Posterior vena cava (tissue), 2 donors: ENCODE measurements at regions of chr12 and their contacts with region 1.

Region 1: DNA sequence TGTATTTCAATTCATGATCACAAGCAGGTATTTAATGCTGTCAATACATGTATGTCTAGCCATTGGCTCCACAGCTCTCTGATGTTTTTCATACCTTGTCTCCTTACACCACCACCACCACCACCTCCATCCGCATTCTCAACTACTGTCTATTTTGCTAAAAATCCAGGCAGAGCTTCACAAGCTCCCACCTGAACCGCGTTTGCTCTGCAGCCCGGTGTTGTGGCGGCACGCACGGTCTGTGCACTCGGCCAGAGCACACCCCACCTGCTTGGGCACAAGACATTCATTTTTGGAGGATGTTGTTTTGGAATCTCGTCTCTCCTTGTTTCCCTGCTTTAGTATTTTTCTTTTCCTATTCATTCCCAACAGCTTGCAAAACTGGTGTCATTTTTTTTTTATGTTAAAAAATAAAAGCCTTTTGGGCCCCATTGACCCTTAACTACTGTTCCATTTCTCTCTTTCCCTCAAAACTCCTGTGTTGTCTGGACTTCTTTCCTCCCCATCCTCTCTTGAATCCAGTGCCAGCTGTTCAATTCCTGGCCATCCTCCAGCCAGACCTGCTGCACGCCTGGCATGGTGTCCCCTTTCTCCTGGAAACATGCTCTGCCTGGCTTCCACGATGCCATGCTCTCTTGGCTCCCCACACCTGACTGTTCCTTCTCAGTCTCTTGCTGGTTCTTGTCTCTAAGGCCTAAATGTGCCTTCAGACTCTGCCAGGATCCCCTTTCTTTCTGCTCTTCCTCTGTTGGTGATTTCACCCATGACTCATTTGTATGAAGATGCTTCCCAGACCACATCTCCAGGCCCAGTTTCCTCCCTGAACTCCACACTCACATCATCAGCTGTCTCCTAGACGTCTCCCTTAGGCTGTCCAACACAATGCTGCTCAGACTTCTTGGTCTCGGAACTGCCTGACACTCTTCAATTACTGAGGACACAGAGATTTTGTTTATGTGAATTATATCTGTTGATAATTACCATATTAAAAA is 37.9 kb downstream of the PIWIL1 start:
- DNase-seq: no peak

Region 2: GRCh38 chr12:130322263-130322662 is 53.3 kb before region 1 on chr12:
- intact Hi-C with region 1: loop called in 1 of 2 experiments (anchors 2 kb)
- DNase-seq: no peak